HEK293 (cell line): ENCODE measurements at regions of chr7 and their contacts with region 1.

Region 1: DNA sequence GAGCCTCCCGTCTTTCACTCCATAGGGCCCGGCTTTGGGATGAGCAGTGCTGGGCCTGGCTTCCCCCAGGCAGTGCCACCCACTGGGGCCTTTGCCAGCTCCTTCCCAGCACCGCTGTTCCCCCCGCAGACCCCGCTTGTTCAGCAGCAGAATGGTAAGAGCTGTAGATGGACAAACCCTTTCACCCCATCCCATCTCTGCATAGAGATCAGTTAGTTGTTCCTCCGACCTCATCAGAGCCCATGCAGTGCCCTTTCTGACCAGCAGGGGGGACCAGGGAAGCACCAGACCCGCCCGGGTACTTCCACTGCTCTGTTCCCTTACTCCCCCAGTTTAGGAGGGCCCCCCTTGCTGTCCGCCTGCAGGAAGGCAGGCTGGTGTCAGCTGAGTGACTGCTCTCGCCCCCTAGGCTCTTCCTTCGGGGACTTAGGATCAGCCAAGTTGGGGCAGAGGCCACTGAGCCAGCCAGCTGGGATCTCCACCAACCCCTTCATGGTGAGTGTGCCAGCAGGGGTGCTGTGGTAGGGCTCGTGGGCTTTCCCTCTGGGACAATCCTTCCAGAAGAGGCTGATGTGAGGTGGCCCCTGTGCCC is 9.8 kb downstream of the SAP25 start:
- H3K4me3 ChIP-seq: no peak overlapping the region
- H3K27ac ChIP-seq: no peak overlapping the region
- H3K4me1 ChIP-seq: no peaks in the 10 kb centered on the region
- CTCF ChIP-seq: peak; percentile 89

Region 2: GRCh38 chr7:100215895-100216294 is 348.0 kb before region 1 on chr7:
- CTCF ChIA-PET with region 1: no interaction called
- POLR2A ChIA-PET with region 1: no interaction called
- H3K4me3 ChIP-seq: no peak overlapping the region
- H3K27ac ChIP-seq: no peak overlapping the region
- H3K4me1 ChIP-seq: no peaks in the 10 kb centered on the region
- CTCF ChIP-seq: no peak

Region 3: DNA sequence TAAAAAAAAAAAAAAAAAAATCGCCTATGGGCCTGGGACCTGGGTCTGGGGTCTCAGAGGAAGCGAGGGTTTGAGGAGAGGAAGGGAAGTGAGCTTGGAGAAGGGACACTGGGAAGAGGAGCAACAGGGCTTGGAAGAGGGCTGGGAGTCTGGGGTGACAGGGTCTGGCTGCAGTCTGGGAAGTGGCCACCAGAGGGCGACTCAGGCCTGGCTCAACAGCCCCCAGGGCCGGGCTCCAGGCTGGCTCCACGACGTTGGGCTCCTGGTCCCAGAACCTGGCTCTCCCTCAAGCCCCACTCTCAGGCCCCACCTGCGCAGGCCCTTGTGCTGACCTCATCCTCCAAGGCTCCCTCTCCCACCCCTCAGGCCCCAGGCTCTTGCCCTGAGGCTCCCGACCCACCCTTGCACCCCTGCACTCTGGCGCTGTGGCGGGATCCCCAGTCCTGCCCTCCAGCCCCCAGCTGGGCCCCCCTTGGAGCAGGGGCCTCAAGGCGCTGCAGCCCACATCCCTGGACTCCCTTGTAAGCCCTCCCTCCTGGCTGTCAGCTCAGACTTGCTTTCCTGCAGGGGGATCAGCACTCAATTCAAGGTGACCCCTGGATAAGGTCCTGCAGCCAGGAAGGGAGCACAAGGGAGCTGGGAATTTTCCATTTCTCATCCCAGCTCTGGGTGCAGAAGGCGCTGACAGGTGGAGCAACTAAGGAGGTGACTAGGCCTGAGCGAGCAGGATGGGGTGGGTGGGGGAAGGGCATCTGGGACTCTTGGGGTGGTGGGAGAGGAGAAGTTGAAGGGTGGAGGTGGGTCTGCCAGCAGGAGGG is 94.5 kb before region 1 on chr7:
- CTCF ChIA-PET with region 1: interaction called, 85 read pairs
- POLR2A ChIA-PET with region 1: interaction called, 4 read pairs
- H3K4me3 ChIP-seq: no peak overlapping the region
- H3K27ac ChIP-seq: no peak overlapping the region
- H3K4me1 ChIP-seq: peaks cover 3% of the 10 kb centered on the region; the same call in 1 of the 2 replicates
- CTCF ChIP-seq: peak; percentile 93

Region 4: DNA sequence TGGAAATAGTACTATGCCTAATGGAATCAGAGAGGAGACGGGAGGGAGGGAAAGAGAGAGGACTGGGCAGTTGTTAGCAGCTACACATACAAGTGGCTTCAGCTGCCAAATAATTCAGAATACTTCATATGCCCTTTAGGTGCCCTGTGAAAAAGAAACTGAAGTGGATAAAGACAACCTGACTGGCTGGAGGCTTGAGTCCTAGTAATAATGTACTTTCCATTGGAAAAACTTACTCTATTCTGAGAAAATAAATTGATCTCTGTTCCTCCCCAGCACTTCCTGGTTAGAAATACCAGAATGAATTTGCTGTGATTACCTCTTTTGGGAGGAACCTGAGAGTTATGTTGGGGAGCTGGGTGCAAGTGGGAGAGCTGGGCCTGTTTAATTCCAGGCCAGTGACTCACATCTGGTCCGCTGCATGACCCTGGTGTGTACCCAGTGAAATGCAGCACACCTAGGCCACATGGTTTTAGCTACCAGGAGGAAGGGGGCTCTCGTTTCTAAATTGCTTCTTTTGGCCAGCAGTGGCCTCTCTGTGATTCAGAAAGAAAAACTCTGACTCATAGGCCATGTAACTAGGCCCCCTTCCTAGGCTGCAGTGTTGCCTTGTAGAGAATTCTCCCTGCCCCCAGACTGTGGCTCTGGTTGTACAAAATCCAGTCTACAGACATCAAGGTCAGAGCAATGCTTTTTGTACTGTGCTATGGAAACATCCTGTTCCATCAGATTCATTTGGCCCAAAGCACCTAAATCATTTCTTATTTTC is 18.4 kb before region 1 on chr7:
- CTCF ChIA-PET with region 1: interaction called, 36 read pairs
- POLR2A ChIA-PET with region 1: no interaction called
- H3K4me3 ChIP-seq: no peak overlapping the region
- H3K27ac ChIP-seq: peak overlapping the region; percentile 72
- H3K4me1 ChIP-seq: peaks cover 39% of the 10 kb centered on the region
- CTCF ChIP-seq: peak; percentile 50; the same call in 1 of the 2 replicates

Region 5: DNA sequence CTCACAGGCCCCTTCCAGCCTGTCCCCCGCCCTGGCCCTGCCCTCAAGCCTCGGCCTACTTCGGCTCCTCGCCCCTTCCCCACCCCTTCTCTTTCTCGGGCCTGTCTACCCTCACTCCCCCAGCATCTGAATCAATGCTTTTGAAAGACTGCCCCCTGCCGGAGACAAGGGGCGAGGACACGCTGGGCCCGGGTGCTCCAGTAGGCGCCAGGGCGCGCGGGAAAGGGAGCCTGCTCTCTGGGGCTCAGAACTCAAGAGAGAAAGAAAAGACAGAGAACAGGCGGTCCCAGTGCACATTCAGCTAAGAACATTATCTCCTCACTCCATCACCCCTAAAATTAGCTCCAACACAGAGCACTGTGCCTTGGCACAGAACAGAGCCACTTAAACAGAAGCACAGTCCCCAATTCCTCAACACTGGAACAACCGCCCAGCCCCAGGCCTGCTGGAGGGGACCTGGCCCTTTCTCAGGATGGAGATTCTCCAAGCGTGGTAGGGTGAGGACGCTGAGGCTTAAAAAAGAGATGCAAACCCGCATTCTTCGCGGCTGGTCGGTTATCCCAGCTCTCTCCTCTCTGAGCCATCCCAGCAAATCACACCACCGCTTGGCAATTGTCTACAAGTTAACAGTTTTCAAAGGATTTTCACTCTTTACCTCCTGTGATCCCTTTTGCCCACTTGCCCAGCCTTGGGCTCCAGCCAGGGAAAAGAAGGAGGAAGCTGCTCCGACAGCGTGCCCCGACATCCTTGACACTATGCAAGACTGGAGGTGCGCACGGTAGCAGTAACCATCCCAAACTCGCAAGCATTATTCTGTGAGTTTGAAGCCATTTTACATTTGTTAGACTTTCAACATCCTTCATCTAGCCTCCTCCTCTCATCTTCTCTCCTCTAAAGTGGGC is 128.0 kb after region 1 on chr7:
- CTCF ChIA-PET with region 1: interaction called, 37 read pairs
- POLR2A ChIA-PET with region 1: interaction called, 4 read pairs
- H3K4me3 ChIP-seq: peak overlapping the region; percentile 6; the same call in 1 of the 2 replicates
- H3K27ac ChIP-seq: peak overlapping the region; percentile 25; the same call in 1 of the 2 replicates
- H3K4me1 ChIP-seq: peaks cover 2% of the 10 kb centered on the region; the same call in 1 of the 2 replicates
- CTCF ChIP-seq: peak; percentile 93

Region 6: GRCh38 chr7:100719523-100720319 is 155.8 kb after region 1 on chr7:
- CTCF ChIA-PET with region 1: interaction called, 10 read pairs
- POLR2A ChIA-PET with region 1: no interaction called
- H3K4me3 ChIP-seq: no peak overlapping the region
- H3K27ac ChIP-seq: no peak overlapping the region
- H3K4me1 ChIP-seq: no peaks in the 10 kb centered on the region
- CTCF ChIP-seq: no peak